PC-3 (cell line): ENCODE measurements at regions of chr2 and their contacts with region 1.

Region 1: DNA sequence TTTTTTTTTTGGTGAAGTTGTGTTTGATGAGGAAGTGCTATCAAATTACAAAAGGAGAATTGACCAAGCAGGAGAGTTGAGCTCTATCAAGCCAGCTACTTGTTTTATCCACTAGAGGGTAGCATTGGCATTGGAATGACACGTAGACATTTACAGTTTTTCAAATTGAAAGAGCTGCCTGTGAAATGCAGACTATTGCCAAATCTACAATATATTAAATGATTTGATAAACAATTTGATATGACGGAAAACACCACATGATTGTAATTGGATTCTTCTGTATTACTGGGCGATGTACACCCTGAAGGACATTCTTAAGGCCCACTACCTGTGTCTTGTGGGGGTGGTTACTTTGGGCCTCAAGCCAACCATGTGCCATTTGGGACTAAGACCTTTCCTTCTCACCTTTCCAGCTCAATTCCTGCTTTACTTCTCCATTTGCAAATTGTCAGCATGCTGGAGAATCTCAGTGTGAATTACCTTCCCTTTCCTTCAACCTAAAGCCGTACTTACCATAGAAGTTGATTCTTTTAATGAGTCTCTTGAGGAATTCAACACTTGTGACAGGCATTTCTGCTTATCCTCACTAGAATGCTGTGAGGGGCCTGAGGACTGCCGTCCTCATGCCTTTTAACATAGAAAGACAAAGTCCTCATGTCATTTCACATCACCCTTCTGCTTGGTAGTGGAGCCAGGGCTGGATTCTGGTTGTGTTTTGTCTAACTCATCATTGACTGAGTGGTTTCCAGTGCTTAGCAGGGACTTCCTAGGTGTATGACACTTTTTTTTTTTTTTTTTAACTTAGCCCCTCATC is 134.8 kb upstream of the THUMPD2 start:
- DNase-seq: peak; percentile 88
- ATAC-seq: peak; percentile 74
- H3K4me3 ChIP-seq: no peak overlapping the region
- H3K27ac ChIP-seq: no peak overlapping the region
- H3K4me1 ChIP-seq: peaks cover 16% of the 10 kb centered on the region
- H3K27me3 ChIP-seq: no peaks in the 10 kb centered on the region
- CTCF ChIP-seq: peak; percentile 90

Region 2: DNA sequence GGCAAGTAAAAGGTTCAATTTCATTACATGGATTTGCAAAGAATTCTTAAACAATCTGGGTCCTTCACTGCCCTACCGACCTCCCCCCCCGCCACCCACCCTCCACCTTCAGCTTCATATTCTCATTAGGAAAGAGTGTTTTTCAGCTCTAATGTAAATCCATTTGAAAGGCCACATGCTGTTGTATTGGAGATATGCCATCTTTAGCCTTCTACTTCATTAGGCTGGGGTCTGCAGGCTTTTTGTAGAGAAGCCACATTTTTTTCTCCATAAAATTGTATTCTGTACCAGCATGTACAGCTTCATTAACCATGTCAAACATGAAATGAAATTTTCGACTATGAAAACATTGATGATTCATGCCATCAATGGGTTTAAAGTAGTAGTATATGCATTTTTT is 92.0 kb before region 1 on chr2:
- CTCF ChIA-PET with region 1: no interaction called
- POLR2A ChIA-PET with region 1: no interaction called
- intact Hi-C with region 1: no loop called
- DNase-seq: no peak
- ATAC-seq: no peak
- H3K4me3 ChIP-seq: no peak overlapping the region
- H3K27ac ChIP-seq: no peak overlapping the region
- H3K4me1 ChIP-seq: no peaks in the 10 kb centered on the region
- H3K27me3 ChIP-seq: no peaks in the 10 kb centered on the region
- CTCF ChIP-seq: no peak

Region 3: GRCh38 chr2:39837856-39838453 is 75.9 kb before region 1 on chr2:
- CTCF ChIA-PET with region 1: interaction called, 5 read pairs
- POLR2A ChIA-PET with region 1: no interaction called
- intact Hi-C with region 1: loop called (anchors 1 kb)
- DNase-seq: peak; percentile 75
- ATAC-seq: peak; percentile 91
- H3K4me3 ChIP-seq: no peak overlapping the region
- H3K27ac ChIP-seq: no peak overlapping the region
- H3K4me1 ChIP-seq: peaks cover 5% of the 10 kb centered on the region
- H3K27me3 ChIP-seq: no peaks in the 10 kb centered on the region
- CTCF ChIP-seq: peak; percentile 96

Region 4: DNA sequence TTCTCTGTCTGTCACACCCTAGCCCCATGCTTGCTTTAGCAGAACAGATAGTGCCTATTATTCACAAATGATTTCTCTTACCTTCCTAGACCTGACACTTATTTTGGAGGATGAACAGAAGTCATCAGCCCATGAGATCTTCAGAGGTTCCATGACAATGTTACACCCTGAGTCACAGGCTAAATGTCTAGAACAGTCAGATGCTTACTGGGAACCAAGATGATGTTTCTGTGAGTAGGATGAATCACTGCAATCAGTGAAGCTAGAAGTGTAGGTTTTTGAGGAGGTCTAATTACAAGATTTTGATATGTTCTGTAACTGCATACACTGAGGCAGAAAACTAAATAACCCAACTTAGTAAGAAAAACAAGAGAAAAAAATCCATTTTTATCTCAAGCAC is 11.8 kb before region 1 on chr2:
- CTCF ChIA-PET with region 1: no interaction called
- POLR2A ChIA-PET with region 1: no interaction called
- intact Hi-C with region 1: no loop called
- DNase-seq: peak; percentile 45
- ATAC-seq: peak; percentile 21; the same call in 1 of the 2 replicates
- H3K4me3 ChIP-seq: no peak overlapping the region
- H3K27ac ChIP-seq: no peak overlapping the region
- H3K4me1 ChIP-seq: peaks cover 15% of the 10 kb centered on the region
- H3K27me3 ChIP-seq: no peaks in the 10 kb centered on the region
- CTCF ChIP-seq: no peak

Region 5: GRCh38 chr2:40095000-40095399 is 181.1 kb after region 1 on chr2:
- CTCF ChIA-PET with region 1: no interaction called
- POLR2A ChIA-PET with region 1: no interaction called
- intact Hi-C with region 1: loop called (anchors 10 kb)
- DNase-seq: peak; percentile 90
- ATAC-seq: peak; percentile 36
- H3K4me3 ChIP-seq: no peak overlapping the region
- H3K27ac ChIP-seq: no peak overlapping the region
- H3K4me1 ChIP-seq: peaks cover 56% of the 10 kb centered on the region
- H3K27me3 ChIP-seq: no peaks in the 10 kb centered on the region
- CTCF ChIP-seq: no peak

Region 6: GRCh38 chr2:40212804-40213470 is 299.1 kb after region 1 on chr2:
- CTCF ChIA-PET with region 1: interaction called, 8 read pairs
- POLR2A ChIA-PET with region 1: no interaction called
- intact Hi-C with region 1: loop called (anchors 10 kb)
- DNase-seq: peak; percentile 49
- ATAC-seq: peak; percentile 64; the same call in 1 of the 2 replicates
- H3K4me3 ChIP-seq: no peak overlapping the region
- H3K27ac ChIP-seq: no peak overlapping the region
- H3K4me1 ChIP-seq: no peaks in the 10 kb centered on the region
- H3K27me3 ChIP-seq: no peaks in the 10 kb centered on the region
- CTCF ChIP-seq: peak; percentile 73

Region 7: DNA sequence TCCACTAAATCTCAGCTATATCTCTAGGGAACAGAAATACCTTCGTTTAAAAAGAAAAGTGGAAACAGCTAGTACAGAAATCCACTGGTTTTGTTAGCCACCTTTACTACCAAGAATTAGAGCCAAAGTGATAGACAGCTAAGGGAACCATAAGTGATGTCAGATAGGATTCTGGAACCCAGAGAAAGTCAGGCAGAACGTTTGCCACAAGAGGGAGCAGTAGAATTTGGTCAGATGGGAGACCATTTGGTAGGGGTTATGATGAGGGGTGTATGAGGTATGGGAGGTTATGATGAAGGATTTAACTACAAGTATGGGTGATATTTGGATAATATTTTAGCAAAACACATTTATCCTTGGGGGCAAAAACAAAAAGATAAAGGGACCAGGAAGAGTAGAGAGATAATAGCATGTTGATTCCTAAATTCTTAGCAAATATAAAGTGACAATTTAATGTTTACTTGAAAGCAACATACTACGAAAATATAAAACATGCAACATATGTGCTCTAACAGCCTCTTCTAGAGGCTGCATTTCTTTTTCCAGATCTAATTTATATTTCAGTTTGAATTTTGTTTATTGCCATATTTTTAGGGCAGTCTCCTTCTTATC is 534.7 kb after region 1 on chr2:
- CTCF ChIA-PET with region 1: interaction called, 4 read pairs
- POLR2A ChIA-PET with region 1: no interaction called
- intact Hi-C with region 1: loop called (anchors 10 kb)
- DNase-seq: peak; percentile 68
- ATAC-seq: no peak
- H3K4me3 ChIP-seq: no peak overlapping the region
- H3K27ac ChIP-seq: no peak overlapping the region
- H3K4me1 ChIP-seq: no peaks in the 10 kb centered on the region
- H3K27me3 ChIP-seq: no peaks in the 10 kb centered on the region
- CTCF ChIP-seq: peak; percentile 84

Region 8: DNA sequence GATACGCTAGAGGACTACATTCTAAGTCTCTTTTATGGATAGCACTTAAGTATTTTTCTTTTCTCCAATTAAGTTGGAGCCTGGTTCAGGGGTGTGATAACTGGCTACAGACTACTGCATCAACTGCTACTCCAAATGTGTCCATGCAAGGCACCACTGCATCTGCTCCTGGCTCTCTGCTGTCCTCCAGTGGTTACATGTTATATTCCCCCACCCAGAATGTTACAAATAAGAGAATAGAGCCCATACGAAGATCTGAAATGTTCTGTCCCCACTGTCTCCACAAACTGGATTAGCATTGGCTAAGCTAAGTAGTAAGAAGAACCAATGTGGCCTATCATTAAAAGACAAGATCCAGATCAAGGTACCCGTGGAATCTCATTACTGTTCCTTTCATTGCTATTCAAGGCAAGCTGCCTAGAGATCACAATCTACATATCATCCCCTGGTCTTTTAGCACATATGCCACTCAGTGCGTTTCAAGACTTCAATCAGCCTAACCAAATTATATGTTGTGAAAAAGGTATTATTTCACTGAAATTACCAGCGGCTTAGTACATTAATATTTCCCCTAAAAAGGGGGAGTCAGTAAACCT is 846.3 kb after region 1 on chr2:
- CTCF ChIA-PET with region 1: no interaction called
- POLR2A ChIA-PET with region 1: no interaction called
- intact Hi-C with region 1: loop called (anchors 1 kb)
- DNase-seq: peak; percentile 80
- ATAC-seq: peak; percentile 96
- H3K4me3 ChIP-seq: no peak overlapping the region
- H3K27ac ChIP-seq: no peak overlapping the region
- H3K4me1 ChIP-seq: no peaks in the 10 kb centered on the region
- H3K27me3 ChIP-seq: no peaks in the 10 kb centered on the region
- CTCF ChIP-seq: peak; percentile 94